Sigmoid colon (tissue), 7 donors: ENCODE measurements at regions of chr12 and their contacts with region 1.

Region 1: DNA sequence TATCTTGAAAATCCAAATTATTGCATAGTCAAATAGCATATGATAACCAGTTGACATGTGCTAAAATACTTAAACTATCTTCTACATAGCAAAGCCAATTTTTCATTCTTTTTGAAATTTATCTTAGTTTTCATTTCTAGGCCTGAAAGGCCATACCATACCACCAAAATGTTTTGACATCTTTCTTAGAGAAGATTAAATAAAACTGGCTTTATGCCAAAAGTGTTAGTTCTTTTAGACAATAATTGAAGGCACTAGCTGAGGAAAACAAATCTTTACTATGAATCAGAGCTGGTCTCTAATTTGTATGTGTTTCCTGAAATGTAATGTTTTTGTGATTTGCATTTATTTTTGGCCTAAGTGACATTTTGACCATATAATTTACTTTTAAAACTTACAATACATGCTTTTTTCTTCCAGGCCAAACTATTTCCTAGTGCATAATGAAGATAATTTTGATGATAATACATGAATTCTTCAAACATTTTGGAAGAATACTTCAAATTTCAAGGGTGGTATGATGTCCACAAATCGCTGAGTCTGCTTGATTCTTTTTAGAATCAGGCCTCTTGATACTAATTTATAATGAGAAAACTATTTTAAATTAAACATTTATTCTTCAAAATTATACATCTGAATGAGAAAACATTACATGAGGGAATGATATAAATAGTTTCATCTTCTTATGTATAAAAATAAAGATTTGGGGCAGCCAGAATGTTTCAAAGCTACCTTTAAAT is 6.5 kb upstream of the KCNMB4 start:
- DNase-seq: no peak
- H3K4me3 ChIP-seq: no peak overlapping the region
- H3K27ac ChIP-seq: no peak overlapping the region
- H3K4me1 ChIP-seq: no peaks in the 10 kb centered on the region
- H3K27me3 ChIP-seq: peaks cover 0 to 10% (median 0%) of the 10 kb centered on the region in 3 donors
- CTCF ChIP-seq: no peak
- EP300 ChIP-seq: no peak
- POLR2A ChIP-seq: no peak

Region 2: DNA sequence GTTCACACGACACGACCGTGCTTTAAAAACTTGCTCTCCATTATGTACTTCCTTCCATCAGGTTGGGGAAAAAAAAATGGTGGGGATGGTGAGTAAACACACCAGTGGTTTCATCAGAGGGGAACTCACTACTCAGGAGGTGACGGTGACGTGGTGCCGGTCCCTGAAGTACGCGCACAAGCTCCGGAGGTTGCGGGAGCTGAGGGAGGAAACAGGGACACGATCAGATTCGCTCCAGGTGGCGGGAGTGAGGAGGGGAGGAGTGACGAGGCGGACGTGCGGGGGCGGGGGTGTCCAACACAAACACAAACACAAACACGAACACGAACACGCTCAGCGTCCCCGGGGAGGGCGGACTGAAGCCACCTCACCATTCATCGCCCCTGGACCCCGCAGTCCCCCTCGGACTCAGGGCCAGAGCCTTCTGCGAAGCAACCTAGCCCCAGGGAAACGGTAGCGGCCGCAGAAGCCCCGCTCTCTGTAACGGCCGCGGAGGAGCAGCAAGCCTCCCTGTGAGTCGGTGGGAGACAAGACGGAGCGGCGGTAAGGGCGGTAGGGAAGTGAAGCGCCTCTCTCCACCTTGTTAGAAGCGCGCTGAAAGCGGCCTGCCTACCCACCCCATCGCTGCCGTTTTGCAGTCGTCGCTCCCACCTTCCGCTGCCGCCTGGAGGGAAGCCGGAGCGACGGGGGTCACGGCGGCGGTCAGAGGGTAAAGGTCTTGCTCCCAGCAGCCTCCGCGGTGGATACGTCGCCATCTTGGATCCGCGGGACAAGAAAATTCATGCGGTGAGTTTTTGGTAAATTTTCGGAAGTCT is 116.7 kb before region 1 on chr12 and contains the start of gene CNOT2:
- intact Hi-C with region 1: loop called (anchors 2 kb)
- DNase-seq: peak; percentile 93
- H3K4me3 ChIP-seq: peak within 1 kb of the TSS; percentile 70 to 95 (median 86)
- H3K27ac ChIP-seq: peak within 1 kb of the TSS; percentile 87 to 99 (median 96)
- H3K4me1 ChIP-seq: peaks cover 0 to 52% (median 41%) of the 10 kb centered on the region in 4 donors
- H3K27me3 ChIP-seq: no peaks in the 10 kb centered on the region
- CTCF ChIP-seq: no peak
- EP300 ChIP-seq: no peak
- POLR2A ChIP-seq: no peak
- total RNA-seq, gene CNOT2: 98.8 to 171 (median 123) TPM

Region 3: GRCh38 chr12:70418101-70418500 is 58.5 kb after region 1 on chr12:
- intact Hi-C with region 1: no loop called
- DNase-seq: no peak
- H3K4me3 ChIP-seq: no peak overlapping the region
- H3K27ac ChIP-seq: no peak overlapping the region
- H3K4me1 ChIP-seq: no peaks in the 10 kb centered on the region
- H3K27me3 ChIP-seq: no peaks in the 10 kb centered on the region
- CTCF ChIP-seq: no peak
- EP300 ChIP-seq: no peak
- POLR2A ChIP-seq: no peak